ENCODE measurements at regions of chr6 and their contacts with region 1.

Region 1: GRCh38 chr6:142885182-142885867 is 59.7 kb downstream of the HIVEP2 start:
- DNase-seq: peak; percentile 28 to 91 (median 83)
- ATAC-seq: peak; percentile 92
- H3K4me3 ChIP-seq: peak overlapping the region; percentile 44
- H3K4me3 Mint-ChIP-seq: peak overlapping the region; percentile 78 to 98 (median 94)
- H3K27ac ChIP-seq: peak overlapping the region; percentile 84
- H3K27ac Mint-ChIP-seq: peak overlapping the region; percentile 76 to 100 (median 99)
- H3K4me1 ChIP-seq: peaks cover 52 to 62% of the 10 kb centered on the region in 2 donors
- H3K4me1 Mint-ChIP-seq: peaks cover 45 to 99% (median 94%) of the 10 kb centered on the region in 7 donors
- H3K27me3 ChIP-seq: no peaks in the 10 kb centered on the region
- H3K27me3 Mint-ChIP-seq: no peaks in the 10 kb centered on the region

Region 2: DNA sequence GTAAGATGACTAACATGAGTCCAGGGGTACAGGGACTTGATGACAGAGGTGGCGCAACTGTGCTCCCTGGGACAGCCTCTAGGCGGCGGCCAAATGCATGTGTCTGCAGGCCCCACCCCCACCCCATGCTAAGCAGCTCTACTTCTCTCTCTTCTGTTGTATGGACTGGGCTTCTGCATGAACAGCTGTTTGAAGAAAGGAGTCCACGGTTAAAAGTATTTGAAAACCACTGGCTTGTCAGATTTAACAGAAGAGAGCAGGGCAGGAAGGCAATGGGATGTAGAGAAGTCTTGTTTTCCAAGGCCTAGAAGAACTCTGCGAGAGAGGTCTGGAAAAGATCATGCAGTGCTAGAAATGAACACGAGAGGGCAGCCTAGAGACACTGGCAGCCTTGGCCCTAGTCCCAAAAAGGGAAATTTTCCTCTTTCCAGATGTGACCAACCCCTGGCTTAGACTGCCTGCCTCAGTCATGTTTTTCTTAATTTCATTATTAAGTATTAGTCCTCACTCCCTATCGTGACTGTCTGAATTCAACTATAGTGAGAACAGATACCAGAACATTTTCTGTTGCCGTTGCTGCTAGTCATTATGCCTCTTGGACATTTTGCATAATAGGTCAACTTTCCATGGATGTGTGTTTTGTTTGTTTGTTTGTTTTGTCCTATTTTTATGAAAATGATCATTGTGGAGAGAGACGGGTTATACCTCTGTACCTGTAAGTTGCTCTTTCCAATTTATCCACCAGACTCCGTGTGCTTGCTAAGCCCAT is 318.5 kb before region 1 on chr6:
- CTCF ChIA-PET with region 1: no interaction called
- POLR2A ChIA-PET with region 1: no interaction called
- intact Hi-C with region 1: loop called in 1 of 2 experiments (anchors 2 kb)
- DNase-seq: peak in 8 of 9 donors; percentile 17 to 69 (median 54)
- ATAC-seq: peak; percentile 81
- H3K4me3 ChIP-seq: no peak overlapping the region
- H3K4me3 Mint-ChIP-seq: peak overlapping the region in 7 of 10 donors; percentile 8 to 78 (median 51)
- H3K27ac ChIP-seq: no peak overlapping the region
- H3K27ac Mint-ChIP-seq: peak overlapping the region in 8 of 9 donors; percentile 51 to 92 (median 76)
- H3K4me1 ChIP-seq: peaks cover 0 to 60% of the 10 kb centered on the region in 2 donors
- H3K4me1 Mint-ChIP-seq: peaks cover 19 to 85% (median 74%) of the 10 kb centered on the region in 7 donors
- H3K27me3 ChIP-seq: no peaks in the 10 kb centered on the region
- H3K27me3 Mint-ChIP-seq: no peaks in the 10 kb centered on the region

Region 3: DNA sequence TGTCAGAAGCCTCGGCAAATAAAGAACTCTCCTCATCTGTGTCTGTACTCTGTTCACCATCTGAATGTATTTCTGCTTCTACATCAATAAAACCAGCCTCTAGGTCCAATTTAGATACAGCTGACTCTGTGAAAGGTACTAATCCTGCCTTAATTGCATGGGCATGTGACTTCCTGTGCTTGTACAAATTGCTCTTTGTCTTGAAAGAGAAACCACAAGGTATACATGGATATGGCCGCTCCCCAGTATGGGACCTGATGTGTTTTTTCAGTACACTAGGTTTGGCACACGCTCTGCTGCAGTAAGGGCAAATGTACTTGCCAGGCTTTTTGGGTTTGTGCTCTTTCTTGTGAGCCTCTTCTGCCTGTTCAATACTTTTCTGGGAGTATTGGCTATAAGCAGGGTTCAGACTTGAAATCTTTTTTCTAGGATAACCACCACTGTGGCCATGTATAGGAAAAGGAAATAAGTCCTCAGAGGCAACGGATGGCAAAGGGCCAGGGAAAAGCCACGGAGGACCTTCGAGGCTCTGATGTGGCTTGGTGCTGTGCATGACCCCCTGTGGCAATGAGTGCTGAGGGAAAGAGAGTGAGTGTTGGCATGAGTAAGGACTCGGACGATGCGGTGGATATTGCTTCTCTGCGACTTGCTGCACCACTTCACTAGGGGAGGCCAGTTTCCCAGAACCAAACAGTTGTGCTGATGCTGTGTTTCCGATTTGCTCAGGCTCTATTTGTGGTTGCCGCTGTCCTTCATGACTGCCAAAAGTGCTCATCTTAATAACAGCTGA is 111.3 kb before region 1 on chr6:
- CTCF ChIA-PET with region 1: no interaction called
- POLR2A ChIA-PET with region 1: interaction called, 6 read pairs
- intact Hi-C with region 1: loop called (anchors 5 kb)
- DNase-seq: peak in 3 of 9 donors; percentile 17 to 28 (median 23)
- ATAC-seq: peak; percentile 50
- H3K4me3 ChIP-seq: no peak overlapping the region
- H3K4me3 Mint-ChIP-seq: peak overlapping the region; percentile 23 to 61 (median 49)
- H3K27ac ChIP-seq: peak overlapping the region; percentile 18
- H3K27ac Mint-ChIP-seq: peak overlapping the region; percentile 52 to 94 (median 80)
- H3K4me1 ChIP-seq: peaks cover 10 to 17% of the 10 kb centered on the region in 2 donors
- H3K4me1 Mint-ChIP-seq: peaks cover 14 to 75% (median 43%) of the 10 kb centered on the region in 7 donors
- H3K27me3 ChIP-seq: no peaks in the 10 kb centered on the region
- H3K27me3 Mint-ChIP-seq: no peaks in the 10 kb centered on the region

Region 4: DNA sequence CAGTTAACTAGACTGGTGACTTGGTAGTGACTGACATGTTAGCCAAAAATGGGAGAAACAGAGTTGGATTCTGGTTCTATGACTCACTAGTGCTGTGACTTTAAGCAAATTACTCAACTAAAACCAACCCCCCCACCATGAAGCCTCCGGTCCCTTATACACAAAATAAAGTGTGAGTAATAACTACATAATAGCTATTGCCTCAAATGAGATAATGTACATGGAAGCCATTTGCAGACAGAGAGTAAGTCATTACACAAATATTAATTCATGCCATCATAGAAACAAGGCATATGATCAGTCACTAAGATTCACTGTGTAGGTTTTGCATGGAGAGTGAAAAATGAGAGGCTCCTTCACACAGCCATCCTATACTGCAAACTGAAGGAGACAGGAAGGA is 52.3 kb before region 1 on chr6:
- CTCF ChIA-PET with region 1: no interaction called
- POLR2A ChIA-PET with region 1: no interaction called
- intact Hi-C with region 1: no loop called
- DNase-seq: no peak
- ATAC-seq: no peak
- H3K4me3 ChIP-seq: no peak overlapping the region
- H3K4me3 Mint-ChIP-seq: peak overlapping the region in 5 of 10 donors; percentile 14 to 44 (median 30)
- H3K27ac ChIP-seq: no peak overlapping the region
- H3K27ac Mint-ChIP-seq: peak overlapping the region in 7 of 9 donors; percentile 12 to 75 (median 34)
- H3K4me1 ChIP-seq: peaks cover 14 to 17% of the 10 kb centered on the region in 2 donors
- H3K4me1 Mint-ChIP-seq: peaks cover 34 to 95% (median 84%) of the 10 kb centered on the region in 7 donors
- H3K27me3 ChIP-seq: no peaks in the 10 kb centered on the region
- H3K27me3 Mint-ChIP-seq: no peaks in the 10 kb centered on the region

Region 5: GRCh38 chr6:142850679-142851423 is 34.5 kb before region 1 on chr6:
- CTCF ChIA-PET with region 1: no interaction called
- POLR2A ChIA-PET with region 1: interaction called, 96 read pairs
- intact Hi-C with region 1: loop called in 1 of 2 experiments (anchors 1 kb)
- DNase-seq: peak in 1 of 9 donors; percentile 39
- ATAC-seq: peak; percentile 36
- H3K4me3 ChIP-seq: peak overlapping the region; percentile 32
- H3K4me3 Mint-ChIP-seq: peak overlapping the region; percentile 58 to 78 (median 72)
- H3K27ac ChIP-seq: peak overlapping the region; percentile 66
- H3K27ac Mint-ChIP-seq: peak overlapping the region; percentile 76 to 100 (median 91)
- H3K4me1 ChIP-seq: peaks cover 94 to 95% of the 10 kb centered on the region in 2 donors
- H3K4me1 Mint-ChIP-seq: peaks cover 47 to 100% (median 97%) of the 10 kb centered on the region in 7 donors
- H3K27me3 ChIP-seq: no peaks in the 10 kb centered on the region
- H3K27me3 Mint-ChIP-seq: no peaks in the 10 kb centered on the region

Region 6: DNA sequence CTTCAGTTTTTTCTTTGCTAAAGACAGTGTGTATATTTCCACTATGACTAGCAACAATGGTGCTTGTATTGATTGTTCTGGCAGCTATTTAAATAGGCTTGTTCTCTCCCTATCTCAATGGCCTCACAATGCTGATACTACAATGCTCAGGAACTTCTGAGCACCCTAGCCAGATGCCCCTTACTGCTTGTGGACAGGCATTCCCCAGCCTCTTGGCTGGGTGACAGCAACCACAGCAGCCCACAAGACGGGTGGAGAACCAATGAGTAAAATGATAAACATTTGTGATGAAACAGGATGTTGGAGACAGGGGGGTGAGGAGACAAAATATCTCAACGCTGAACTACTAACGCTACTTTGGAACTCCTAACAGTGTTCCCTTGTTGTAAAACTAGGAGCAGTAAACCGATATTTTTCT is 17.3 kb after region 1 on chr6:
- CTCF ChIA-PET with region 1: interaction called, 6 read pairs
- POLR2A ChIA-PET with region 1: interaction called, 36 read pairs
- intact Hi-C with region 1: loop called (anchors 1 kb)
- DNase-seq: peak; percentile 60 to 89 (median 84)
- ATAC-seq: peak; percentile 84
- H3K4me3 ChIP-seq: peak overlapping the region; percentile 26
- H3K4me3 Mint-ChIP-seq: peak overlapping the region in 7 of 10 donors; percentile 77 to 88 (median 83)
- H3K27ac ChIP-seq: peak overlapping the region; percentile 88
- H3K27ac Mint-ChIP-seq: peak overlapping the region in 1 of 9 donors; percentile 95
- H3K4me1 ChIP-seq: peaks cover 48 to 71% of the 10 kb centered on the region in 2 donors
- H3K4me1 Mint-ChIP-seq: peaks cover 13 to 64% (median 41%) of the 10 kb centered on the region in 7 donors
- H3K27me3 ChIP-seq: no peaks in the 10 kb centered on the region
- H3K27me3 Mint-ChIP-seq: no peaks in the 10 kb centered on the region

Region 7: GRCh38 chr6:143026696-143027449 is 141.5 kb after region 1 on chr6:
- CTCF ChIA-PET with region 1: no interaction called
- POLR2A ChIA-PET with region 1: no interaction called
- intact Hi-C with region 1: loop called in 1 of 2 experiments (anchors 2 kb)
- DNase-seq: peak in 7 of 9 donors; percentile 3 to 47 (median 34)
- ATAC-seq: peak; percentile 76
- H3K4me3 ChIP-seq: no peak overlapping the region
- H3K4me3 Mint-ChIP-seq: no peak overlapping the region
- H3K27ac ChIP-seq: no peak overlapping the region
- H3K27ac Mint-ChIP-seq: peak overlapping the region in 3 of 9 donors; percentile 28 to 76 (median 53)
- H3K4me1 ChIP-seq: no peaks in the 10 kb centered on the region
- H3K4me1 Mint-ChIP-seq: peaks cover 0 to 5% (median 0%) of the 10 kb centered on the region in 7 donors
- H3K27me3 ChIP-seq: no peaks in the 10 kb centered on the region
- H3K27me3 Mint-ChIP-seq: no peaks in the 10 kb centered on the region

Region 8: DNA sequence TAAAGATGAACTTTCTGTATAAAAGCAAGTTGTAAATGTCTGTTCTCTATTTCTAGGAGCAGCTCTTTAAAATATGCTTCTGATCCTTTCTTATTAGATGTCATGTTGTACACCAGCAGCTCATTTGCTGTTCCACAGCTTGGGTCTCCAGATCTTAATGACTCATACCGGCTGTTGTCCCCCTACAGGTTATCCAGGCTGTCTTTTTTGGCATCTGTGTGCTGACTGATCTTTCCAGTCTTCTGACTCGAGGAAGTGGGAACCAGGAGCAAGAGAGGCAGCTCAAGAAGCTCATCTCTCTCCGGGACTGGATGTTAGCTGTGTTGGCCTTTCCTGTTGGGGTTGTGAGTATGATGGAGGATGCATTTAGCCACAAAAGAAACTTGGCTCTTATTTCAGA is 251.3 kb after region 1 on chr6:
- CTCF ChIA-PET with region 1: no interaction called
- POLR2A ChIA-PET with region 1: no interaction called
- intact Hi-C with region 1: no loop called
- DNase-seq: no peak
- ATAC-seq: no peak
- H3K4me3 ChIP-seq: no peak overlapping the region
- H3K4me3 Mint-ChIP-seq: peak overlapping the region in 8 of 10 donors; percentile 5 to 30 (median 14)
- H3K27ac ChIP-seq: no peak overlapping the region
- H3K27ac Mint-ChIP-seq: peak overlapping the region in 8 of 9 donors; percentile 7 to 83 (median 60)
- H3K4me1 ChIP-seq: peaks cover 0 to 14% of the 10 kb centered on the region in 2 donors
- H3K4me1 Mint-ChIP-seq: peaks cover 3 to 36% (median 28%) of the 10 kb centered on the region in 7 donors
- H3K27me3 ChIP-seq: no peaks in the 10 kb centered on the region
- H3K27me3 Mint-ChIP-seq: no peaks in the 10 kb centered on the region

Measured in naive thymus-derived CD4-positive, alpha-beta T cell (primary cell).